ENCODE measurements at regions of chr7 and their contacts with region 1.

Region 1: DNA sequence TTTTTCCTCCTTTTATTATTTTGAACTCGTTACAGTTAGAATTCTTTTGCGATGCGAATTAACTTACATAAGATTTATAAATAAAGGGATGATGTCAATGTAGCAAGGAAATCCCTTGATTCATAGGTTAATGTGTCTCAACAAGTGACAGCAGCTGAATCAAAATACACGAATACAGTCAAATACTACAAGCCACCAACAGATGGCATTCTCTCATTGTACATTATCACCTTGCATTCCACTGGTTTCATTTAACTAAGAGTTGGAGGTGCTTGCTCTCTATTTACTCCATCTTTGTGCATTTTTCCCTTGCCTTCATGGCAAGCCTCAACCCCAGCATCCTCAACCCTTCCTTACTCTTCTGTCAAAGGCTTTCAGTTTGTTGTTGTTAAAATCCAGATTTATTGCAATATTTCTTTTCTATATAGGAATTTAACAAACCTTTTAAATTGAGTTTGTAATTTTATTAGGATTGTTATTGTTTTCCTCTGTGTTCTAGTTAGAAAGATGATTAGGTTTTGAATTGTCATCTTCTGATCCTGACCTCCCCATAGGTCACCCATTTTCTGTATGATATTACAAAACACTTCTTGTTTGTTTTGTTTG is 78.3 kb downstream of the SLC25A40 start:
- DNase-seq: no peak
- H3K4me3 Mint-ChIP-seq: no peak overlapping the region
- H3K27ac Mint-ChIP-seq: no peak overlapping the region
- H3K4me1 Mint-ChIP-seq: no peaks in the 10 kb centered on the region
- H3K27me3 Mint-ChIP-seq: peaks cover 7% of the 10 kb centered on the region

Region 2: DNA sequence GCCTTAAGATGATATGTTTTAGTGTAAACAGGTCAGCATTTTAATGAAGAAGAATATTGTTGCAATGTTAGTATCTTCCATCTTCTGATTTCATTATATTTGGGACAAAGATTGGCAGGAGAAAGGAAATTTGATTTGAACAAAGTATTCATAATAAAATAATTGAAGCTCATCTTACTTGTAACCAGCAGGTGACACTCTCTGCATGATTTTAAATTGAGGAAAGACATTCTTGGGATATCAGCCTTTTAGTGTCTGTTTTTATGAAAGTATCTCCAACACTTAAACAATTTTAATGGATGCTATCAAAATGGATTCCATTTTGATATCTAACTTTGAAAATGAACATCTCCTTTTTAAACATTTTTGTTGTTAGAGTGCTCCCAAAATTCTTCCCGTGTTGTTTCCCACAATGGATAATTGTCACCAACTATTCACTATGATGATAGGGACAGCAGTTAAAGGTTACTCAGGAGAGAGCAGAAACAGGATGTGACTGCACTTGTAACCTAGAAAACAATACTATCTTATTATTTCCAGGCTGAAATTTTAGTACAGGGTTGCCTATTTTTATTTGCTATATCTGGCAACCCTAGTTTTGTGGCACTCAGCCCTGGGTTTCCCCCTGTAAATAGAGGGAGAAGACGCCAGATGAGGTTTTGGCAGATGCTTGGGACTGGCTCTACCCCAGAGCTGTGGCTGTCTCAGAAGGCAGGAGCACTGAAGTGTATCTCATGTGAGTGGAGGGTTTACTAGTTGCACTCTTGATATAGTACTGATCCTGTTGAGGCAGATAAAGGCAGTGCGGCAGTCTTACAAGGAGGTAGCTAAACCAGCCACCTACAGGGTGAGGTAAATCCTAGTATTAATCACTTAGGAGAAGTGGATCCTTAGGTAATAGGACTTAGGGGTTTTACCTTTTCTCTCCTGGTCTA is 291.4 kb before region 1 on chr7:
- intact Hi-C with region 1: loop called (anchors 5 kb)
- DNase-seq: no peak
- H3K4me3 Mint-ChIP-seq: no peak overlapping the region
- H3K27ac Mint-ChIP-seq: no peak overlapping the region
- H3K4me1 Mint-ChIP-seq: peaks cover 27% of the 10 kb centered on the region
- H3K27me3 Mint-ChIP-seq: no peaks in the 10 kb centered on the region

Region 3: GRCh38 chr7:87886875-87887274 is 89.0 kb after region 1 on chr7:
- intact Hi-C with region 1: loop called (anchors 1 kb)
- DNase-seq: no peak
- H3K4me3 Mint-ChIP-seq: no peak overlapping the region
- H3K27ac Mint-ChIP-seq: no peak overlapping the region
- H3K4me1 Mint-ChIP-seq: peaks cover 24% of the 10 kb centered on the region
- H3K27me3 Mint-ChIP-seq: no peaks in the 10 kb centered on the region

Region 4: DNA sequence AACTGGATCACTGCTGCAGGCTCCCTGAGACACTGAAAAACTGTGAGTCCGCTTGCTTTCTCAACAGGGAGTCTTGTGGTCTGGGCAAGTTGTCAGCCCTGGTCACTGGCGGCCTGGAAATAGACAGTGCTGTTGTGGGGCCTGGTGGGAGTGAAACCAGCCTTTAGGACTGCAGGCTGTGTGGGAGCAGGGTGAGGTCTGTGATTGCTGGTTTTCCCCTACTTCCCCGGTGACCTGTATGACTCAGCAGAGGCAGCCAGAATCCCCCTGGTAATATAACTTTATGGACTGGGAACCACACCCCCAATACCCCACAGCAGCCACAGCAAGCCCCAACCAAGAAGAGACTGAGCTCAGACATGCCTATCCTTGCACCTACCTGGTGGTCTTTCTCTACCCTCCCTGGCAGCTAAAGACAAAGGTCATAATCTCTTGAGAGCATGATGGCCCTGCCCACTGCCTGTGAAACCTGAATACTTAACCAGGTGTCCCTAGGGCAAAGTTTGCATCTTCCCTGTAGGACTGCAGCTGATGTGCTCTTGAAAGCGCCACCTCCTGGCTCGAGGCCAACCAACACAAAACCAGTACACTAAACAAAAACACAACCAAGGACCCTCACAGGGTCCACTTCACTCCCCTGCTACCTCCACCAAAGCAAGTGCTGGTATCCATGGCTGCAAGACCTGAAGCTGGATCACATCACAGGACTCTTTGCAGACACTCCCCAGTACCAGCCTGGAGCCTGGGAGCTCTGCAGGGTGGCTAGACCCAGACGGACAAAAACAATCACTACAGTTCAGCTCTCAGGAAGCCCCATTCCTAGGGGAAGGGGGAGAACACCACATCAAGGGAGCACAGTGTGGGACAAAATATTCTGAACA is 128.9 kb after region 1 on chr7:
- intact Hi-C with region 1: loop called (anchors 5 kb)
- DNase-seq: no peak
- H3K4me3 Mint-ChIP-seq: no peak overlapping the region
- H3K27ac Mint-ChIP-seq: no peak overlapping the region
- H3K4me1 Mint-ChIP-seq: no peaks in the 10 kb centered on the region
- H3K27me3 Mint-ChIP-seq: peaks cover 20% of the 10 kb centered on the region

Region 5: DNA sequence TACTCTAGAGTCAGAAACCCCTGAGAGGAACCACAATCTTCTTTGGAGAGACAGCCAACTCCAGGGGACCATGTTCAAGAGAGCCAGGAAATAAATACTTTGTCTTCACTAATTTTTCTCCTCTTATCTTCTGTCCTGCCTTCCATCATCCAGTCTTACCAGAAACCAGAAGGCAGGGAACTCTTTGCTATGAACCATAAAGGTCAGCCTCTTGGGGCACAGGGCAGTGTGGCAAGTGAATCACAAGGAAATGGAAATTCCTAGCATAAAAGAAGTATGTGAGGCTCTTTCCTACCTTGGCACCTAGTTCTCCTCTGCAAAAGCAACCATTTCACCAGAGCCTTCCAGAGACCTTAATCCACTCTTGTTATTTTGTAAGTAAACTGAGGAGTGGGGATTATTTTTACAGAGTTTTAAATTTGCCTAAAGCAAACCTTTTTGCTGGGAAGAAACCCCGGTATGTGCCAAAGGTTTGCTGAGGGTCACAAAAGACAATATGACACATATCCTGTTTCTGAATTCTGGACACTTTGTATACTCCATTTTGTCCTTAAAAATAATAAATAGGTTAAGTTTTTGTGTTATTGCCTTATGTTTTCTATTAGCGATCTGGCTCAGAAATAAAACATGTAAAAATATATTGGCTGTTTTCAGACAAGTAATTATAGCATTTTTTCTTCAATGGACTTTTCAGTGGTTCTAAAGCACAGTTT is 223.2 kb after region 1 on chr7:
- intact Hi-C with region 1: no loop called
- DNase-seq: no peak
- H3K4me3 Mint-ChIP-seq: no peak overlapping the region
- H3K27ac Mint-ChIP-seq: no peak overlapping the region
- H3K4me1 Mint-ChIP-seq: no peaks in the 10 kb centered on the region
- H3K27me3 Mint-ChIP-seq: peaks cover 2% of the 10 kb centered on the region

Region 6: DNA sequence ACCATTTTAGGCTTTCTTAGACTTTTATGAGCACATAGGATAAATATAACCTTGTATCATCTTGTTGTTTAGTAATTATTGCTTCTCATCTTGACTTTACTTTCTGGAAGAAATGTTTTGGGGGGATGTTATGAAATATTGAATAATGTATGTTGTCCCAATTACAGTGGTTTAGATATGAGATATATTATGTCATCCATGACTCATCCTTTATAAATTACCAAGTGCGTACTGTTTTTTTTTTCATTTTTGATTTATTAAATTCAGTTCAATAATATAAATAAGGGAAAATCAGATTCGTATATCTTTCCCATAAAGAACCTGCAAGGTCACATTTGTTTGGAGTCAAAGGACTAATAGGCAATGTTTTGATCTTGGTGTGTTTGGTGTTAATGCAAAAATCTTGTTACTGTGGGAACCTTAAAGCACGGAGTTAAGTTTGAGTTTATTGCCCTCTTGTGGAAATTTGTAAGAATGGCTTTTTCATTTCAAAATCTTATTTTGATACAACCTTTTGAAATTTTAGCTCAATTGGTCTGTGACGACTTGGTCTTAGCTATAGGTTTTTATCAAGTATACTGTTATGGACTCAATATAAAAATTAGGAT is 313.3 kb after region 1 on chr7:
- intact Hi-C with region 1: loop called (anchors 1 kb)
- DNase-seq: no peak
- H3K4me3 Mint-ChIP-seq: no peak overlapping the region
- H3K27ac Mint-ChIP-seq: no peak overlapping the region
- H3K4me1 Mint-ChIP-seq: peaks cover 4% of the 10 kb centered on the region
- H3K27me3 Mint-ChIP-seq: no peaks in the 10 kb centered on the region

Region 7: GRCh38 chr7:88169717-88170320 is 371.9 kb after region 1 on chr7:
- intact Hi-C with region 1: loop called (anchors 1 kb)
- DNase-seq: no peak
- H3K4me3 Mint-ChIP-seq: no peak overlapping the region
- H3K27ac Mint-ChIP-seq: no peak overlapping the region
- H3K4me1 Mint-ChIP-seq: no peaks in the 10 kb centered on the region
- H3K27me3 Mint-ChIP-seq: peaks cover 4% of the 10 kb centered on the region

Measured in activated T-helper 1 cell treated with anti-CD3 and anti-CD28 coated beads, Interleukin-12 subunit alpha, Interleukin-12 subunit beta, Interleukin-2, Interleukin-4 antibody, amounts not matched to agents 30 ng/mL and 10 ng/mL and 1 ng/mL, durations not matched to agents 14 hours and 24 hours and 36 hours (primary cell).